ENCODE measurements at regions of chr6 and their contacts with region 1.

Region 1: GRCh38 chr6:90080876-90081481 is 186.7 kb downstream of the GJA10 start:
- DNase-seq: peak; percentile 77
- H3K4me3 Mint-ChIP-seq: peak overlapping the region; percentile 94
- H3K27ac Mint-ChIP-seq: peak overlapping the region; percentile 98
- H3K4me1 Mint-ChIP-seq: peaks cover 78% of the 10 kb centered on the region
- H3K27me3 Mint-ChIP-seq: no peaks in the 10 kb centered on the region

Region 2: DNA sequence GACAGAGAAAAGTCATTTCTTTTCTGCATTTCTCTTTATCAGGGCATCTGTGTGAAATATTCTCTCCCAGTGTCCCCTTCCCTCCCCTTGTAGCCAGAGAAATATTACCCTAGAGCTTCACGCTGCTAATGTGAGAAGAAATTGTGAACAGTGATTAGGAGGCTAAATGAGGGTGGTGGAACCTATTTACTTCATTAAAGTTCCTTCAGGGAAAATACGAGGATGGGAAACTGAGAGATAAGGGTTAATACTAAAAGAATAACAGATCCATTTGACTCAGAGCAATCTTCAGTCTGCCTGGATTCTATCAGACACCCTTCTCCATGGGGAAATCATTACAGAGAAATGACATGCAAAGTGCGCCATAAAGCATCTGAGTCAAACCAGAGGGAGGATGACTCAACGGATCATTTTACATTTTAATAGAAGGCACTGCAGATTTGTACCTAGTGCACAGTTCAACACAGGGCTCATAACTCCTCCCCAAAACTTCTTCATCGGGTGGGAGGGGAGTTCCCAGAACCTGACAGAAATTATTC is 55.4 kb before region 1 on chr6:
- intact Hi-C with region 1: loop called (anchors 1 kb)
- DNase-seq: no peak
- H3K4me3 Mint-ChIP-seq: peak overlapping the region; percentile 72
- H3K27ac Mint-ChIP-seq: peak overlapping the region; percentile 92
- H3K4me1 Mint-ChIP-seq: peaks cover 71% of the 10 kb centered on the region
- H3K27me3 Mint-ChIP-seq: no peaks in the 10 kb centered on the region

Region 3: DNA sequence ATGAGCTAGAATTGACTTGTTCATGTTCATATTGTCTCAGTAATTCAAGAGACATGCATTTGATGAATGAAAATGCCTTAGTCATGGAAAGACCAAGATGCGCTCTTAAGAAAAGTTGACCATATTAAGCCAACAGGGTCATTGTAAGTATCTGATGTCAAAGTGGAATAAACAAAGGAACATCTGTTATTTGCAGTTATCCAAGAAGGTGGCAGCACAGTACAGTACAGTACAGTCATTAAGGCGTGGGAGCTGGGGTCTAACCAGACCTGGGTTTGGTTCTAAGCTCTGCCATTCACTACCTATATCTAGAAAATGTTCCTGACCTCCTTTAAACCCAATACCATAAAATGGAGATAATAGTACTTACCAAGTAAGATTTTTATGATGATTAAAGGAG is 37.6 kb after region 1 on chr6:
- intact Hi-C with region 1: no loop called
- DNase-seq: no peak
- H3K4me3 Mint-ChIP-seq: no peak overlapping the region
- H3K27ac Mint-ChIP-seq: no peak overlapping the region
- H3K4me1 Mint-ChIP-seq: peaks cover 32% of the 10 kb centered on the region
- H3K27me3 Mint-ChIP-seq: no peaks in the 10 kb centered on the region

Region 4: DNA sequence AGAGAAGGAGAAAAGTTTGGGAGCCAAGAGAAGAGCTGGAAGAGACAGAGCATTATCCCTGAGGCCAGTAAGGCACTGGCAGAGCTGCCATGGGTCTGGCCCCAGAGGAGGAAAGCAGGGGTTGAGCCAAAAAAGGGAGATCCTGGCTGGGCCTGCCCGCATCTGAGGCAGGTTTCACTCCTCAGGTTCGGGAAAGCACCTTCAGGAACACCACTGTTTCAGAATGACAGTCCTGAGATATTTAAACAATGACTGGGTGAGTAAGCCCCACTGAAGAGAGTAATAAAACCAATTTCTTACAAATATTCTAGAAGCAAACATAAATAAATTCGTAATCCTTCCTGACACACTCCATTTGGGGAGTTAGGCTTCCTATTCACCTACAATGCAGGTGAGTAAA is 63.4 kb after region 1 on chr6:
- intact Hi-C with region 1: loop called (anchors 1 kb)
- DNase-seq: no peak
- H3K4me3 Mint-ChIP-seq: peak overlapping the region; percentile 54
- H3K27ac Mint-ChIP-seq: peak overlapping the region; percentile 92
- H3K4me1 Mint-ChIP-seq: peaks cover 68% of the 10 kb centered on the region
- H3K27me3 Mint-ChIP-seq: no peaks in the 10 kb centered on the region

Region 5: GRCh38 chr6:90216072-90216977 is 135.3 kb after region 1 on chr6:
- intact Hi-C with region 1: no loop called
- DNase-seq: no peak
- H3K4me3 Mint-ChIP-seq: no peak overlapping the region
- H3K27ac Mint-ChIP-seq: peak overlapping the region; percentile 39
- H3K4me1 Mint-ChIP-seq: peaks cover 29% of the 10 kb centered on the region
- H3K27me3 Mint-ChIP-seq: no peaks in the 10 kb centered on the region

Region 6: DNA sequence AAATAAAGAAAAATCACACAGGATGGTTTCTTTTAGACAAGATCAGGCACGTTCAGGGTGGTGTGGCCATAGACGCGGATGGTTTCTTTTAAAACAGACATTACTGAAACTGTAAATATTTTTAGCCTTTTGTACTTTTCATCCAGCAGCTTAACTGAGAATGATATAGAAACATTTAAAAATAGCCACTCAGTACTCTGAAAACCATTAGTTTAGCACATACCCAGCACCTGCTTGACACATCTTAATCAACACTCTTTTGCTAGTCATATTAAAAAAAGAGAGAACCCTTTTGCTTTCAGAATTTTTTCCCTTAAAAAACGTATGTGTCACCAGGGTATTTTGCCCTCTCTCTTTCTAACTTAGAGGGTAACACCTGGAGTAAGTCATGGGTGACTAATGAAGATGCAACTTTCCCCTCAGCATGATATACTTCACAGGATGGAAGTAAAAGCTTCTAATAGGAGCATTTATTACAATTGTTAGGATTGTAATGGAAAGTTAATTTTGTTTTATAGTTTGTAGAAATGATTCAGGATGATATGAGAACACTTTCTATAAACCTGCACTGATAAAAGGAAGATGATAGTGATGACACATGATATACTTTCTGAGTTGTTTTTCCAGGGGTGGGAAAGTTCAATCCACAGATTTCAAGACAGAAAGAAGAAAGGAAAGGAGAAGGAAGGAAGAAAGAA is 170.5 kb after region 1 on chr6:
- intact Hi-C with region 1: loop called (anchors 1 kb)
- DNase-seq: no peak
- H3K4me3 Mint-ChIP-seq: peak overlapping the region; percentile 48
- H3K27ac Mint-ChIP-seq: peak overlapping the region; percentile 83
- H3K4me1 Mint-ChIP-seq: peaks cover 71% of the 10 kb centered on the region
- H3K27me3 Mint-ChIP-seq: no peaks in the 10 kb centered on the region

Region 7: GRCh38 chr6:90369024-90369519 is 288.1 kb after region 1 on chr6:
- intact Hi-C with region 1: loop called (anchors 1 kb)
- DNase-seq: peak; percentile 29
- H3K4me3 Mint-ChIP-seq: no peak overlapping the region
- H3K27ac Mint-ChIP-seq: peak overlapping the region; percentile 62
- H3K4me1 Mint-ChIP-seq: peaks cover 30% of the 10 kb centered on the region
- H3K27me3 Mint-ChIP-seq: peaks cover 7% of the 10 kb centered on the region

Region 8: GRCh38 chr6:90478789-90479602 is 398.0 kb after region 1 on chr6:
- intact Hi-C with region 1: loop called (anchors 1 kb)
- DNase-seq: peak; percentile 75
- H3K4me3 Mint-ChIP-seq: peak overlapping the region; percentile 17
- H3K27ac Mint-ChIP-seq: peak overlapping the region; percentile 67
- H3K4me1 Mint-ChIP-seq: peaks cover 58% of the 10 kb centered on the region
- H3K27me3 Mint-ChIP-seq: no peaks in the 10 kb centered on the region

Measured in activated T-helper 2 cell treated with anti-CD3 and anti-CD28 coated beads, Interferon-gamma antibody, Interleukin-2, Interleukin-4, amounts not matched to agents 10 μg/mL and 5 μg/mL and 100 μg/mL, durations not matched to agents 14 hours and 24 hours and 36 hours (primary cell).